ENCODE measurements at regions of chr11 and their contacts with region 1.

Region 1: GRCh38 chr11:62678770-62679696 is at the start of gene UBXN1:
- DNase-seq: peak; percentile 55 to 95
- H3K4me3 ChIP-seq: peak within 1 kb of the TSS; percentile 78 to 100
- H3K27ac ChIP-seq: peak within 1 kb of the TSS; percentile 96
- H3K4me1 ChIP-seq: peaks cover 7 to 11% of the 10 kb centered on the region in 2 donors
- H3K27me3 ChIP-seq: no peaks in the 10 kb centered on the region
- CTCF ChIP-seq: no peak
- total RNA-seq, gene UBXN1: 60.2 TPM

Region 2: DNA sequence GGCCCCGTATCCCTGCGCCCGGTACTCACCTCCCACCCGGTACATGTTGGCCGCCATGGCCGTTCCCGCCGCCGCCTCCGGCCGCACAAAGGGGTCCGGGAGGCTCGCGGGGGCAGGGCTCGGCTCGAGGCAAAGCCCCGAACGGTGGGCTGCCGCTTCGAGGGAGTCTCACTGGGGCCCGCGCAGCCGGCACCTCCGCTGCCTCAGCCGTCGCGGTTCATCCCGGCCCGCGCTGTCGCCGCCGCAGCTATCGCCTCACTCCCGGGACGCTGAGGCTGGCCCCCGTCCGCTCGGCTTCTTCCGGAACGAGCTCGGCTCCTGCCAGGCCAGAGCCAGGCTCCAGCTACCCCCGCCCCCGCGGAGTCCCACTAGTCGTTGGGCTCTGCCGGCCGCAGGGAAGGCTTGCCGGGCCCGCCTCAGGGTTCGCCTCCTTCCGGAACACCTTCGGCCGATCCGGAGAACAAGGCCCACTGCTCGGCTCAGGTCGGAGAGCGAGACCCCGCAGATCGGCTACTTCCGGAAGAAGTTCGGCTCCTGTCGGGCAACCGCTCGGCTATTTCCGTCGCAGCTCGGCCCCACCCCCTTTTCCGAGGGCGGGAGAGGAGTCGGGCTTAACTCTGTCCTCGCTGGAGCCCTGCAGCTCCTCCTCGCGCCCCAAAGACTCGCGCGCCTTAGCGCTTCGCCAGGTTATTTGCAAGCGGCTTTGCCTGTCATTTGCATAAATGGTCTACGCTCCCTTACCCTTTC is 77.5 kb before region 1 on chr11 and contains the start of gene MTA2:
- intact Hi-C with region 1: loop called (anchors 5 kb)
- DNase-seq: peak; percentile 89 to 98
- H3K4me3 ChIP-seq: peak within 1 kb of the TSS; percentile 87 to 98
- H3K27ac ChIP-seq: peak within 1 kb of the TSS; percentile 96 to 97
- H3K4me1 ChIP-seq: peaks cover 8 to 20% of the 10 kb centered on the region in 2 donors
- H3K27me3 ChIP-seq: no peaks in the 10 kb centered on the region
- CTCF ChIP-seq: no peak
- total RNA-seq, gene MTA2: 79.2 TPM

Region 3: GRCh38 chr11:62652161-62653006 is 26.6 kb before region 1 on chr11:
- intact Hi-C with region 1: loop called (anchors 2 kb)
- DNase-seq: no peak
- H3K4me3 ChIP-seq: peak overlapping the region; percentile 78 to 96
- H3K27ac ChIP-seq: peak overlapping the region; percentile 93 to 94
- H3K4me1 ChIP-seq: peaks cover 0 to 15% of the 10 kb centered on the region in 2 donors
- H3K27me3 ChIP-seq: no peaks in the 10 kb centered on the region
- CTCF ChIP-seq: no peak

Region 4: GRCh38 chr11:62665075-62665598 is 13.9 kb before region 1 on chr11 and contains the starts of genes C11orf98 and CSKMT:
- intact Hi-C with region 1: loop called (anchors 1 kb)
- DNase-seq: peak; percentile 82 to 96
- H3K4me3 ChIP-seq: peak within 1 kb of the TSS; percentile 71 to 93
- H3K27ac ChIP-seq: peak within 1 kb of the TSS; percentile 80 to 89
- H3K4me1 ChIP-seq: peaks cover 10 to 20% of the 10 kb centered on the region in 2 donors
- H3K27me3 ChIP-seq: no peaks in the 10 kb centered on the region
- CTCF ChIP-seq: peak in 1 of 3 experiments; percentile 4
- total RNA-seq, gene C11orf98: 49.8 TPM
- total RNA-seq, gene CSKMT: not detected